GM10248 (cell line): ENCODE measurements at regions of chr18 and their contacts with region 1.

Region 1: GRCh38 chr18:3771121-3771971 is 321.4 kb downstream of the TGIF1 start:
- DNase-seq: peak; percentile 87
- CTCF ChIP-seq: peak; percentile 89

Region 2: DNA sequence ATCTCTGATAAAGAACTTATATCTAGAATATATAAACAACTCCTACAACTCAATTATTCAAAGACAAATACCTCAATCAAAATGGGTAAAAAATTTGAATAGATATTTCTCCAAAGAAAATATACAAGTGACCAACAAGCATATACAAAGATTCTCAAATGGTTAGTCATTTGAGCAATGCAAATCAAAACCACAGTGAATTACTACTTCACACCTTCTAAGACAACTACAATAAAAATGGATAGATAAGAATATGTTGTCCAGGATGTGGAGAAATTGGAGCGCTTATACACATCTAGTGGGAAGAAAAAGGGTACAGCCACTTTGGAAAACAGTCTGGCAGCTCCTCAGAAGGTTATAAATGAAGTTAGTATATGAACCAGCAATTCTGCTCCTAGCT is 11.6 kb after region 1 on chr18:
- CTCF ChIA-PET with region 1: interaction called, 34 read pairs
- POLR2A ChIA-PET with region 1: no interaction called
- DNase-seq: no peak
- CTCF ChIP-seq: no peak

Region 3: GRCh38 chr18:3806656-3807055 is 35.3 kb after region 1 on chr18:
- CTCF ChIA-PET with region 1: interaction called, 12 read pairs
- POLR2A ChIA-PET with region 1: no interaction called
- DNase-seq: no peak
- CTCF ChIP-seq: no peak

Region 4: DNA sequence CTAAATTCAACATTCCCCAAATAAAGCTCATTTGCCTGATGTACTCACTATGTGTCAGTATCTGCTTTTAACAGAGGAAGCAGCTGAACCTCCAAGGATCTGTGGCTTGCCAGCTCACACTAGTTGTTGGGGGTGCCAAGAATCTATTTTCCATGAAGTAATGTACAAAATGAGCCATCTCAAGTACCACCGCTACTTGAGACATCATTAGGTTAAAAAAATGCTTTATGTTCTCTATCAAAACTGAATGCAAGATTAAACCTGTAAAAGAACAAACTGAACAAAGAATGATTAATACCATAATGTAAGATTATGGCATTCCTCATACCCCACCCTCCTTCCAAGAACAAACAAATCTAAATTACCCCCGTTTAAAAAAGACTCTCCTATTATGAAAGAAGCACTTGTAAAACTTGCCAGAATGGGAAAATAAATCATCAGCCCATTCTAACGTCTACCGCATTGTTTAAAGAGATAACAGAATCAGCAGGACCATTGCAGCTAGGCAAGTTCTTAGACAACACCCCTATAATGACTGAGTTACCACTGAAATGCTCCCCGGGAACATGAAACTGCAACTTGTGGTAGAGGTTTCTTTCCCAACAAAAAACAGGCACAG is 212.1 kb after region 1 on chr18:
- CTCF ChIA-PET with region 1: interaction called, 14 read pairs
- POLR2A ChIA-PET with region 1: no interaction called
- DNase-seq: no peak
- CTCF ChIP-seq: no peak

Region 5: DNA sequence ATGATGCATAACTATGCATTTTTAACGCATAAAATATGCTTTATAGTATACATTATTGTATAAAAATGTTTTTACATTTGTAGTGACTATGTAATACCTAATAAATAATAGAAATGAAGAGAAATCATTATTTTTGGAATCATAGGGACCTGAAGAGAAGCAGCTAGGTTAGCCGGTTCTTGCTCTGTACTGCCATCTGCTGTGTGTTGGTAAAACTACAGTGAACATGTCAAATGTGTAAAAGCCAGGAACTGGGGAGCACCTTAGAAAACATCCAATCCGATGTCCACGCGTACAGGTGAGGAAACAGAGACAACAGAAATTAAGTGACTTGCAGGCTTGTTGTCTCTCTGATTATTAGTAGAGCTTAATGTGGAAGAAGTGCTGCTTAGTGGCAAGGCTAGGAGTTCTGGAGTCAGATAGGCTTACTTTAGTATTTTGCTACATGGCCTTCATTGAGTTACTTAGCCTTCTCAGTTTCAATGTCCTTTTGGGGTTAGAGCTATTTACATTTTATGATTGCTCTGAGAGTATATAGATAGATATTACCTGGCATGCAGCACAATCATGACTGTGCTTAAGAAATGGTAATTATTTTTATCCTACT is 297.3 kb after region 1 on chr18:
- CTCF ChIA-PET with region 1: interaction called, 13 read pairs
- POLR2A ChIA-PET with region 1: no interaction called
- DNase-seq: peak; percentile 22
- CTCF ChIP-seq: peak; percentile 71